PC-9 (cell line): ENCODE measurements at regions of chr6 and their contacts with region 1.

Region 1: GRCh38 chr6:15674690-15675386 is 12.0 kb upstream of the DTNBP1 start:
- DNase-seq: no peak
- H3K4me3 ChIP-seq: no peak overlapping the region
- H3K27ac ChIP-seq: no peak overlapping the region
- H3K4me1 ChIP-seq: no peaks in the 10 kb centered on the region
- H3K27me3 ChIP-seq: peaks cover 78% of the 10 kb centered on the region
- CTCF ChIP-seq: no peak

Region 2: GRCh38 chr6:15213838-15214400 is 460.9 kb before region 1 on chr6:
- CTCF ChIA-PET with region 1: no interaction called
- POLR2A ChIA-PET with region 1: no interaction called
- intact Hi-C with region 1: no loop called
- DNase-seq: no peak
- H3K4me3 ChIP-seq: no peak overlapping the region
- H3K27ac ChIP-seq: no peak overlapping the region
- H3K4me1 ChIP-seq: no peaks in the 10 kb centered on the region
- H3K27me3 ChIP-seq: no peaks in the 10 kb centered on the region
- CTCF ChIP-seq: no peak

Region 3: DNA sequence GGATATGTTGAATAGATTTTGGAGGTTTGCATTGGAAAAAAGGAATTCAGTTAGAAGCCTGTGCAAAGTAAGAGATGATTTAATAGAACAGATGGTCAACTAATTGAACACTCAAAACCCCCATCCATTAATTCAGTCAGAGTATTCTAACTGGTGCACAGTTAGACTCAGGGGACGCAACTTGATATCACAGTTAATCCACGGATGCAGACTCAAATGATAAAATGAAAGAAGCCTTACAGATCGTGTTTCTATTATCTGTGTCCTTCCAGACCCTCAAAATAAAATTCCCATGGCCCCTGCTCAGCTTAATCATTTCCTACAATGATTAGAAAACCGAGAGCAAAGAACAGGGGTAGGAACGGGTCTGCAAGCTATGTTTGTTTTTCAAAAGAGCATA is 33.4 kb after region 1 on chr6:
- CTCF ChIA-PET with region 1: no interaction called
- POLR2A ChIA-PET with region 1: no interaction called
- intact Hi-C with region 1: no loop called
- DNase-seq: no peak
- H3K4me3 ChIP-seq: no peak overlapping the region
- H3K27ac ChIP-seq: no peak overlapping the region
- H3K4me1 ChIP-seq: no peaks in the 10 kb centered on the region
- H3K27me3 ChIP-seq: peaks cover 93% of the 10 kb centered on the region
- CTCF ChIP-seq: no peak

Region 4: DNA sequence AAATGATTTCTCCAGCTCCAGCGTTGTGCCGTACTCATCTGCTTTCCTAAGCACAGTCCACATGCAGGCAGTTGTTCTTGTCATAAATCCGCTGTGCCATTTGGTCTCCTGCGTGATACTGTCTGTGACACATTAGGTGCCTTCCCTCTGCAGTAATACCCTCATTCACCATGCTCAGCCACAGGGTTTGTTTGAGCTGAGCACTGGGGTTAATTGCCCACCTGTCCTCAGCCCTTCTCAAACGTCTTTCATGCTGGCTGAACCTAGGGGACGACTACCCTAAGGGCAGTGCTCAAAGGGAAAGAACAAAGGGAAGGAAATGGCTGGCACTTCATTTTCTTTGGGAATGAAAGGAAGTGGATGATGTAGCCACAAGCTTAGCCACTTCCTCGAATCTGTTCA is 389.8 kb after region 1 on chr6:
- CTCF ChIA-PET with region 1: no interaction called
- POLR2A ChIA-PET with region 1: no interaction called
- intact Hi-C with region 1: no loop called
- DNase-seq: no peak
- H3K4me3 ChIP-seq: no peak overlapping the region
- H3K27ac ChIP-seq: no peak overlapping the region
- H3K4me1 ChIP-seq: no peaks in the 10 kb centered on the region
- H3K27me3 ChIP-seq: peaks cover 64% of the 10 kb centered on the region
- CTCF ChIP-seq: no peak

Region 5: DNA sequence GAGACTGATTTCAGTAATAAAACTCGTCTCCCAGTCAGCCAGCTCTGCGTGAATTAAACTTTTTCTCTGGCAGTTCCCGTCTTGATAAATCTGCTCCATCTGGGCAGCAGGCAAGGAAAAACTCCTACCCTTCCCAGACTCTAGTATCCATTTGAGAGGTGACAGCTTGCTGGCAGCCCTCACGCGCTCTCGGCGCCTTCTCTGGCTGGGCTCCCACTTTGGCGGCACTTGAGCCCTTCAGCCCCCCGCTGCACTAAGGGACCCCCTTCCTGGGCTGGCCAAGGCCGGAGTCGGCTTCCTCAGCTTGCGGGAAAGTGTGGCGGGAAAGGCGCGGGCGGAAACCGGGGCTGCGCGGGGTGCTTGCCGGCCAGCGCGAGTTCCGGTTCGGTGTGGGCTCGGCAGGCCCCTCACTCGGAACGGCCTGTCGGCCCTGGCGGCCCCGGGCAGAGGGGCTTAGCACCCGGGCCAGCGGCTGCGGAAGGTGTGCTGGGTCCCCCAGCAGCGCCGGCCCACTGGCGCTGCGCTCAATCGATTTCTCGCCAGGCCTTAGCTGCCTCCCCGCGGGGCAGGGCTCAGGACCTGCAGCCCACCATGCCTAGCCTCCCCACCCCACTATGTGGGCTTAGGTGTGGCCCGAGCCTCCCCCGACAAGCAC is 541.8 kb after region 1 on chr6:
- CTCF ChIA-PET with region 1: no interaction called
- POLR2A ChIA-PET with region 1: interaction called, 10 read pairs
- intact Hi-C with region 1: no loop called
- DNase-seq: no peak
- H3K4me3 ChIP-seq: no peak overlapping the region
- H3K27ac ChIP-seq: no peak overlapping the region
- H3K4me1 ChIP-seq: no peaks in the 10 kb centered on the region
- H3K27me3 ChIP-seq: peaks cover 40% of the 10 kb centered on the region
- CTCF ChIP-seq: no peak